ENCODE measurements at regions of chr9 and their contacts with region 1.

Region 1: GRCh38 chr9:5832543-5833529 is at the start of gene ERMP1:
- DNase-seq: peak; percentile 87 to 93 (median 90)
- H3K4me3 ChIP-seq: peak within 1 kb of the TSS; percentile 72 to 93
- H3K4me3 Mint-ChIP-seq: peak within 1 kb of the TSS; percentile 91 to 98 (median 96)
- H3K27ac ChIP-seq: peak within 1 kb of the TSS; percentile 53
- H3K27ac Mint-ChIP-seq: peak within 1 kb of the TSS; percentile 88 to 97 (median 95)
- H3K4me1 ChIP-seq: peaks cover 42% of the 10 kb centered on the region
- H3K4me1 Mint-ChIP-seq: peaks cover 33 to 58% (median 43%) of the 10 kb centered on the region in 4 donors
- H3K27me3 ChIP-seq: no peaks in the 10 kb centered on the region
- H3K27me3 Mint-ChIP-seq: no peaks in the 10 kb centered on the region
- total RNA-seq, gene ERMP1: 22.8 to 24.5 TPM

Region 2: GRCh38 chr9:5773324-5773999 is 59.4 kb before region 1 on chr9:
- CTCF ChIA-PET with region 1: interaction called, 10 read pairs
- POLR2A ChIA-PET with region 1: no interaction called
- intact Hi-C with region 1: no loop called
- DNase-seq: no peak
- H3K4me3 ChIP-seq: no peak overlapping the region
- H3K4me3 Mint-ChIP-seq: no peak overlapping the region
- H3K27ac ChIP-seq: no peak overlapping the region
- H3K27ac Mint-ChIP-seq: peak overlapping the region in 3 of 7 donors; percentile 4 to 48 (median 38)
- H3K4me1 ChIP-seq: no peaks in the 10 kb centered on the region
- H3K4me1 Mint-ChIP-seq: peaks cover 2 to 6% (median 3%) of the 10 kb centered on the region in 4 donors
- H3K27me3 ChIP-seq: no peaks in the 10 kb centered on the region
- H3K27me3 Mint-ChIP-seq: no peaks in the 10 kb centered on the region

Region 3: GRCh38 chr9:5843794-5844504 is 11.1 kb after region 1 on chr9:
- CTCF ChIA-PET with region 1: interaction called, 89 read pairs
- POLR2A ChIA-PET with region 1: interaction called, 97 read pairs
- intact Hi-C with region 1: loop called (anchors 1 kb)
- DNase-seq: no peak
- H3K4me3 ChIP-seq: peak overlapping the region in 1 of 2 donors; percentile 0
- H3K4me3 Mint-ChIP-seq: peak overlapping the region; percentile 68 to 91 (median 79)
- H3K27ac ChIP-seq: peak overlapping the region; percentile 38
- H3K27ac Mint-ChIP-seq: peak overlapping the region; percentile 85 to 96 (median 92)
- H3K4me1 ChIP-seq: peaks cover 58% of the 10 kb centered on the region
- H3K4me1 Mint-ChIP-seq: peaks cover 50 to 82% (median 65%) of the 10 kb centered on the region in 4 donors
- H3K27me3 ChIP-seq: no peaks in the 10 kb centered on the region
- H3K27me3 Mint-ChIP-seq: no peaks in the 10 kb centered on the region

Region 4: GRCh38 chr9:5863092-5863746 is 30.4 kb after region 1 on chr9:
- CTCF ChIA-PET with region 1: interaction called, 17 read pairs
- POLR2A ChIA-PET with region 1: interaction called, 3 read pairs
- intact Hi-C with region 1: loop called (anchors 5 kb)
- DNase-seq: no peak
- H3K4me3 ChIP-seq: no peak overlapping the region
- H3K4me3 Mint-ChIP-seq: no peak overlapping the region
- H3K27ac ChIP-seq: no peak overlapping the region
- H3K27ac Mint-ChIP-seq: no peak overlapping the region
- H3K4me1 ChIP-seq: no peaks in the 10 kb centered on the region
- H3K4me1 Mint-ChIP-seq: no peaks in the 10 kb centered on the region
- H3K27me3 ChIP-seq: no peaks in the 10 kb centered on the region
- H3K27me3 Mint-ChIP-seq: no peaks in the 10 kb centered on the region

Region 5: DNA sequence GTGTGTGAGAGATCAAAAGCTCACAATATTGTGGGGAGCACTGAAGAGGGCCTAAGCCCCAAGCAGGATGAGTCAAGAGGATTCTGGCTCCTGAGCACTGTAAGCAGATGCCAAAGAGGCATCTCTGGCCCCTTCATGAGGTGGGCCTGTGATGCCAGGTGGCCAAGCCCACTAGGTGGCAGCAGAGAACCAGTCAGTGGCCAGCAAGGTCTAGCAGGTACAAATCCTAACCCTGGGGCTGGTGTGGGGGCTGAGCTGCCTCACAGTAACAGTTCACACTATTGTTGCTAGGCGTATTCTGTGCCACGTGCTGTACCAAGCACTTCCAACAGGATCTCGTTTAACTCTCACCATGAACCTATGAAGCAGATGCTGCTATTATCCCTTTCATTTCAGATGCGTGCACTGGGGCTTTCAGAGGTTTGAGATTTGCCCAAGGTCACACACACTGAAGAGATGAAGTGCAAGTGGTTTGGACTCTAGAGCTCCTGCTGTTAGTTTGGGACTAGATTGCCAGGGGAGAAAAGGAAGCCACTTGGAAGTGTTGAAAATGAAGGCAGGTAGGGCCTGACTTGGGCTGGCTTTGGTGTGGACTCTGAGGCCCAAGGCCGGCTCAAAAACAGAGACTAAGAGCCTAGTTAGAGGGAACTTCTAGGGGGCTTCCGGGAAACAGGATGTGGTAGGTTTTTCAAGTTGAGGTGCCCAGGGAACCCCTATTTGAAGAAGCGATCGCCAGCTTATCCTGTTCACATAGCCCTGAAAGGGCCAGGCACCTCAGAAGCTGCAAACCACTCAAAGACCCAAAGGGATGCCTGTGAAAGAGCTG is 53.5 kb after region 1 on chr9:
- CTCF ChIA-PET with region 1: interaction called, 51 read pairs
- POLR2A ChIA-PET with region 1: interaction called, 5 read pairs
- intact Hi-C with region 1: loop called (anchors 5 kb)
- DNase-seq: peak; percentile 61 to 74 (median 64)
- H3K4me3 ChIP-seq: no peak overlapping the region
- H3K4me3 Mint-ChIP-seq: no peak overlapping the region
- H3K27ac ChIP-seq: no peak overlapping the region
- H3K27ac Mint-ChIP-seq: peak overlapping the region in 2 of 7 donors; percentile 27 to 74
- H3K4me1 ChIP-seq: peaks cover 5% of the 10 kb centered on the region
- H3K4me1 Mint-ChIP-seq: peaks cover 5 to 6% (median 5%) of the 10 kb centered on the region in 4 donors
- H3K27me3 ChIP-seq: no peaks in the 10 kb centered on the region
- H3K27me3 Mint-ChIP-seq: no peaks in the 10 kb centered on the region